H1 (cell line): ENCODE measurements at regions of chr4 and their contacts with region 1.

Region 1: GRCh38 chr4:120004054-120004453 is 62.6 kb downstream of the MAD2L1 start:
- DNase-seq: peak in 1 of 2 experiments; percentile 59
- H3K4me3 ChIP-seq: no peak overlapping the region
- H3K27ac ChIP-seq: no peak overlapping the region
- H3K4me1 ChIP-seq: peaks cover 0 to 7% (median 0%) of the 10 kb centered on the region in 4 experiments; a peak in 1 of 7 replicates
- H3K27me3 ChIP-seq: peaks cover 0 to 9% (median 2%) of the 10 kb centered on the region in 4 experiments; a peak in 4 of 7 replicates
- CTCF ChIP-seq: no peak
- EP300 ChIP-seq: no peak
- POLR2A ChIP-seq: peak in 1 of 2 experiments; percentile 85; a peak in 2 of 3 replicates
- RAD21 ChIP-seq: peak; percentile 15 to 22; a peak in 2 of 4 replicates

Region 2: DNA sequence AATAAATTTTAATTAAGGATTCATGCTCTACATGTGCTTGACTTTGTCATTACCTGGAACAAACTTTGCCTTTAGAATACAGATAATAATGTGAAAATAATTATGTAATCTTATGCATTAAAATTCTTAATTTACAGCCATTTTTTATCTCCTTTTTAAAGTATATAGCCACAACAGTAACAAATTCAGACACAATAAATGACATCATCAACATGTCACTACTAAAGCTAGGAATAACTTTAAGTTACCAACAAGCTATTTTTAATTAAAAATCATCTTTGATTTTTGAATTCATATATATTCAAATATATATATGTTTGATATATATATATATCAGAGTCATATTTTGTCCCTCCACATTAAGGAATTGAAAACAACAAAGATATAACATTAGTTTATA is 45.1 kb before region 1 on chr4:
- CTCF ChIA-PET with region 1: interaction called, 4 read pairs
- POLR2A ChIA-PET with region 1: interaction called, 12 read pairs
- DNase-seq: no peak
- H3K4me3 ChIP-seq: no peak overlapping the region; a peak in 1 of 8 replicates
- H3K27ac ChIP-seq: no peak overlapping the region
- H3K4me1 ChIP-seq: peaks cover 0 to 5% (median 1%) of the 10 kb centered on the region in 4 experiments; a peak in 3 of 7 replicates
- H3K27me3 ChIP-seq: no peaks in the 10 kb centered on the region
- CTCF ChIP-seq: no peak
- EP300 ChIP-seq: no peak
- POLR2A ChIP-seq: no peak
- RAD21 ChIP-seq: no peak